ENCODE measurements at regions of chr5 and their contacts with region 1.

Region 1: GRCh38 chr5:168076561-168076991 is 214.9 kb upstream of the WWC1 start:
- DNase-seq: peak; percentile 39 to 84
- H3K4me3 ChIP-seq: no peak overlapping the region
- H3K27ac ChIP-seq: no peak overlapping the region
- H3K4me1 ChIP-seq: no peaks in the 10 kb centered on the region
- H3K27me3 ChIP-seq: no peaks in the 10 kb centered on the region
- CTCF ChIP-seq: peak; percentile 65 to 80 (median 67)
- EP300 ChIP-seq: no peak
- POLR2A ChIP-seq: no peak
- RAD21 ChIP-seq: peak; percentile 73 to 77

Region 2: GRCh38 chr5:168057905-168058304 is 18.7 kb before region 1 on chr5:
- CTCF ChIA-PET with region 1: interaction called, 10 read pairs
- POLR2A ChIA-PET with region 1: no interaction called
- DNase-seq: no peak
- H3K4me3 ChIP-seq: no peak overlapping the region
- H3K27ac ChIP-seq: no peak overlapping the region
- H3K4me1 ChIP-seq: no peaks in the 10 kb centered on the region
- H3K27me3 ChIP-seq: no peaks in the 10 kb centered on the region
- CTCF ChIP-seq: no peak
- EP300 ChIP-seq: no peak
- POLR2A ChIP-seq: no peak
- RAD21 ChIP-seq: no peak

Region 3: GRCh38 chr5:168093200-168093910 is 16.8 kb after region 1 on chr5:
- CTCF ChIA-PET with region 1: interaction called, 13 read pairs
- POLR2A ChIA-PET with region 1: no interaction called
- DNase-seq: no peak
- H3K4me3 ChIP-seq: no peak overlapping the region
- H3K27ac ChIP-seq: no peak overlapping the region
- H3K4me1 ChIP-seq: no peaks in the 10 kb centered on the region
- H3K27me3 ChIP-seq: peaks cover 0 to 1% (median 0%) of the 10 kb centered on the region in 4 experiments; a peak in 1 of 7 replicates
- CTCF ChIP-seq: no peak
- EP300 ChIP-seq: no peak
- POLR2A ChIP-seq: no peak
- RAD21 ChIP-seq: no peak